Cardiac septum (tissue), 1 donor: ENCODE measurements at regions of chr17 and their contacts with region 1.

Region 1: GRCh38 chr17:44556832-44557606 is at the start of gene FZD2:
- DNase-seq: peak; percentile 92
- total RNA-seq, gene FZD2: 5.7 TPM

Region 2: GRCh38 chr17:44628243-44629188 is 71.5 kb after region 1 on chr17:
- intact Hi-C with region 1: loop called (anchors 1 kb)
- DNase-seq: peak; percentile 82